Endothelial cell of umbilical vein (primary cell): ENCODE measurements at regions of chr11 and their contacts with region 1.

Region 1: GRCh38 chr11:122202951-122203456 is 87.0 kb upstream of the BLID start:
- DNase-seq: no peak
- H3K4me3 ChIP-seq: peak overlapping the region in 2 of 3 experiments; percentile 28 to 72
- H3K27ac ChIP-seq: peak overlapping the region; percentile 74
- H3K4me1 ChIP-seq: peaks cover 42% of the 10 kb centered on the region
- H3K27me3 ChIP-seq: no peaks in the 10 kb centered on the region
- CTCF ChIP-seq: peak; percentile 96 to 99
- POLR2A ChIP-seq: no peak

Region 2: DNA sequence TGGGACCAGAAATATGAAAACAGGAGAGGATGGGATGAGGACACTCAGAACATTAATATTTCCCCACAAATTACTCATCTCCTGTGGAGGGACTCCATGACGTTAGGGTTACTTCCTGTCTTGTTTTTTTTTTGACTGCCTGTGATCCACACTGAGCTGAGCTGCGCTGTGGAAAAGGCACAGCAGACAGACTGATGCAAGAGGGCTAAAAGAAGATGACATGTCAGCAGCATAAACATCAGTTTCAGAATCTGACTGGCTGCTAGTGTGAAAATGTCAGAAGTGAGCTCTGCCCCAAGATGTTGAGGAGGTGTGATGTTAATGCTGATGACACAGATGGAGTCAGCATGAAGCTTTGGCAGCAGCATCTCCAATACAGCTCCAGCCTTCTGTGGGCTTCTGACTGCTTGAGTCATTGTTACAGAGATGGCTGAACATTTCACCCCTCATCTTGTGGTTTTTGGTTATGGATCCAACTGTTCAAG is 373.8 kb before region 1 on chr11:
- CTCF ChIA-PET with region 1: no interaction called
- POLR2A ChIA-PET with region 1: no interaction called
- dilution Hi-C with region 1: no loop called
- intact Hi-C with region 1: loop called (anchors 5 kb)
- DNase-seq: peak; percentile 87
- H3K4me3 ChIP-seq: no peak overlapping the region
- H3K27ac ChIP-seq: peak overlapping the region; percentile 81
- H3K4me1 ChIP-seq: peaks cover 26% of the 10 kb centered on the region
- H3K27me3 ChIP-seq: no peaks in the 10 kb centered on the region
- CTCF ChIP-seq: no peak
- POLR2A ChIP-seq: peak; percentile 49

Region 3: GRCh38 chr11:122108192-122108799 is 94.7 kb before region 1 on chr11:
- CTCF ChIA-PET with region 1: interaction called, 91 read pairs
- POLR2A ChIA-PET with region 1: no interaction called
- dilution Hi-C with region 1: no loop called
- intact Hi-C with region 1: loop called (anchors 1 kb)
- DNase-seq: peak; percentile 55
- H3K4me3 ChIP-seq: no peak overlapping the region
- H3K27ac ChIP-seq: no peak overlapping the region
- H3K4me1 ChIP-seq: peaks cover 21% of the 10 kb centered on the region
- H3K27me3 ChIP-seq: no peaks in the 10 kb centered on the region
- CTCF ChIP-seq: peak; percentile 59 to 68
- POLR2A ChIP-seq: no peak

Region 4: GRCh38 chr11:122159173-122159721 is 43.8 kb before region 1 on chr11:
- CTCF ChIA-PET with region 1: interaction called, 21 read pairs
- POLR2A ChIA-PET with region 1: no interaction called
- dilution Hi-C with region 1: no loop called
- intact Hi-C with region 1: loop called (anchors 1 kb)
- DNase-seq: peak; percentile 29
- H3K4me3 ChIP-seq: no peak overlapping the region
- H3K27ac ChIP-seq: peak overlapping the region; percentile 82
- H3K4me1 ChIP-seq: peaks cover 68% of the 10 kb centered on the region
- H3K27me3 ChIP-seq: no peaks in the 10 kb centered on the region
- CTCF ChIP-seq: no peak
- POLR2A ChIP-seq: no peak

Region 5: DNA sequence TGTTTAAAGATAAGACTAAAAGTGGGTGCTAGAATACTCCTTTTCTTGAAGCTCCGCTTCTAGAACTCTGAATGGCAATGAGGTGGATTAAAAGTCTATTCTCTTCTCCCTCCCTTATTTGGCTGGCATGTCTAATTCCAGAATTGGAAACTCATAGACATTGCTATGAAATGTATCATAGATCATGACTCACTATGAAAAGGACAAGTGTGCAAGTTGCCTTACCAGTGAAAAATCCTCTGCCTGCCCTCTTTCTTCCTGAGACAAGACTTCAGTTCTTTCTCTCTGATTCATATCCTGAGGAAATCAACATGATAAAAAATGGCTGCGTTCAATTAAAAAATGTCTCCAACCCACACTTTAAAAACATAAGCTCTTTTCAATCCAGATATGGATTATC is 13.8 kb before region 1 on chr11:
- CTCF ChIA-PET with region 1: interaction called, 27 read pairs
- POLR2A ChIA-PET with region 1: interaction called, 9 read pairs
- dilution Hi-C with region 1: no loop called
- intact Hi-C with region 1: no loop called
- DNase-seq: peak; percentile 94
- H3K4me3 ChIP-seq: peak overlapping the region in 1 of 3 experiments; percentile 7
- H3K27ac ChIP-seq: peak overlapping the region; percentile 85
- H3K4me1 ChIP-seq: peaks cover 58% of the 10 kb centered on the region
- H3K27me3 ChIP-seq: no peaks in the 10 kb centered on the region
- CTCF ChIP-seq: no peak
- POLR2A ChIP-seq: peak; percentile 57